Cardiac septum (tissue), 1 donor: ENCODE measurements at regions of chr10 and their contacts with region 1.

Region 1: DNA sequence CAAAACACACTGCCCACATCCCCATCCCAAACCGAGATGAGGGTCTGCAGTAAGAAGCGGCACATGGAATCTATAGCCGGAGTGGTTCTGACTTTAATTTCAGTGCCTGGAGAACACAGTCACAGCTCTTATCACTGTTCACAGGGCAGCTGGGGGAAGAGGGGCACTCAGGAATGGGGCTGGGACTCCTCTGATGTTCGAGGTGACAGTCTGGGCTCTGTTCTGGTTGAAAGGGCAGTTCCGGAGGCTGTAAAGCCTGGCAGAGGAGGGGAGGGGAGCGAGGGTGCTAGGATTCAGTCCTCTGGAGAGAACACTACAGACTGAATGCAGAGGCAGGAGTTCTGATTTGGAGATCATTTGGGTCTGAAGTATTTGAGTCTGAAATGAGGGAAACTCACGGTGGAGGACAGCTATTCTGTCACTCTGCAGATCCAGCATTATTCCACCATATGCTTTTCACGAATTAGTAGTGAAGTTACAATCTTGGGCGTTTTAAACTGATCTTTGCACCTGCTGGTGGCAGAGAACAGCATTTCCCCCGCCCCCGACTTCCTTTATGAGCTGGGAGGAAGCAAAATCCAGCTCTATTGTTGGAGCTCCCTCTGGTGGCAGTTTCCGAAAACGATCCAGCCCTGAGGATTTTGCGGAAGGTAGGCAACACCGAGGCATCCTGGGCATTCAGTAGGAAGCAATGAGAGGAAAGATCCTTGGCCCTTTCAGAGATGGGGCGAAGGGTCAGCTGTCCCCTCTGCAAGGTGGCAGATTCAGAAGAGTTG is 22.7 kb upstream of the KCNK18 start:
- DNase-seq: peak; percentile 84

Region 2: DNA sequence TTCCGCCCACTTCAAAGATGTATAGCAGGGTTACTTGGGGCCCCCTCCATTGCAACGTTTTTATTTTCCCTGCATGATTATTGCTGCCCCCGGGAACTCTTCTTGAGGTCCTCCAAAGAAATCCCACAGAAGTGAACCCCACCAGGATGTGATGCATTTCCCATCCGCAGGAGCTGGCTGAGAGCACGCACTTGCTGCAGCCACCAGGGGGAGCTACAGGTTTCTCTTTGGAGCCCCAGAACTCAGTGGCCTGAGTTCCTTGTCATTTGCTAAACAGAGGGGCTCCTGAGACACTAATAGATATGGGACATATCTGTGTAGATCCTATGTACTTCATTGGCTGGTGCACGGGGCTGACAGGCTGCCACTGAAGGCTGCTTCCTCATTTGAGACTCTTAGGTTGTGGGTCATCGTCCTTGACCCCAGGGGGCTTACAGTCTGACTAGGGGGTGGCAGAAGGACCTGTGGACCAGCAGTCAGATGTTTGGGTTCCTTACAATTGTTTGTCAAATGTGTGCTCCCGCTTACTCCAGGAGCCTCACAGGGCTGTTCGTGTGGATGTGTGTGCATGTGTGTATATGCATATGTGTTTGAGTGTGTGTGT is 377.6 kb before region 1 on chr10:
- intact Hi-C with region 1: loop called (anchors 2 kb)
- DNase-seq: no peak

Region 3: GRCh38 chr10:117274509-117274908 is 99.9 kb after region 1 on chr10:
- intact Hi-C with region 1: no loop called
- DNase-seq: no peak